Activated CD4-positive, alpha-beta T cell treated with anti-CD3 and anti-CD28 coated beads for 36 hours (primary cell): ENCODE measurements at regions of chr11 and their contacts with region 1.

Region 1: GRCh38 chr11:46560300-46560991 is 33.4 kb downstream of the AMBRA1 start:
- DNase-seq: peak; percentile 40
- ATAC-seq: peak; percentile 57
- H3K4me3 Mint-ChIP-seq: peak overlapping the region; percentile 65
- H3K27ac Mint-ChIP-seq: peak overlapping the region; percentile 90
- H3K4me1 Mint-ChIP-seq: peaks cover 64% of the 10 kb centered on the region
- H3K27me3 Mint-ChIP-seq: no peaks in the 10 kb centered on the region

Region 2: GRCh38 chr11:46380340-46381047 is 180.0 kb before region 1 on chr11:
- CTCF ChIA-PET with region 1: no interaction called
- POLR2A ChIA-PET with region 1: no interaction called
- intact Hi-C with region 1: no loop called
- DNase-seq: peak; percentile 90
- ATAC-seq: peak; percentile 65
- H3K4me3 Mint-ChIP-seq: peak overlapping the region; percentile 72
- H3K27ac Mint-ChIP-seq: peak overlapping the region; percentile 58
- H3K4me1 Mint-ChIP-seq: peaks cover 8% of the 10 kb centered on the region
- H3K27me3 Mint-ChIP-seq: peaks cover 8% of the 10 kb centered on the region

Region 3: DNA sequence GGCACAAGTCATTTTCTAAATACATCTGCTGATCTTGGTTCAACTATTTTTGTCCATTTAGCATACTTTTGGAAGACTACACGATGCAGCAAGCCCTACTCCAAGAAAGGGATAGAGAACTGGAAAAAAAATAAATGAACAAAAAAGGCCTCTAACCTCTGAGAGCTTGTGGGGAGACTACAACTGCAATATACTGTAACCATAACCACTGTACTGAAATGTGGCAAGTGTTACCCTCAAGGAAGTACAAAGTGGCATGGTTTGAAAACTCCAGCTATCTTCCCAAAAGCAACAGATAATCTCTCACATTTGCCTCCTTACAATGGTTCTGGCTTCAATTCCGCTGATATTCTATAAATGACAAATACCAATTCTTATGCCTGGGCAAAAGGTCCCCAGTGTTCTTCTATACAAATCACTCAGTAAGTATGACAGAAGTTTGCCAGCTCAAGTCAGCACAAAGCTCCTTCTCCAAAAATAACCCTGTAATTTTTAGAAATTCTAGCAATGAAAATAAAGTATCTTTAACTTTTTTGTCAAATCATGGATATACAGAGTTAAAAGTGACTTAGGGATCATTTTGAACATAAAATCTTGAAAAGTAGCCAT is 10.4 kb after region 1 on chr11:
- CTCF ChIA-PET with region 1: interaction called, 10 read pairs
- POLR2A ChIA-PET with region 1: no interaction called
- intact Hi-C with region 1: no loop called
- DNase-seq: no peak
- ATAC-seq: no peak
- H3K4me3 Mint-ChIP-seq: no peak overlapping the region
- H3K27ac Mint-ChIP-seq: no peak overlapping the region
- H3K4me1 Mint-ChIP-seq: peaks cover 25% of the 10 kb centered on the region
- H3K27me3 Mint-ChIP-seq: no peaks in the 10 kb centered on the region

Region 4: DNA sequence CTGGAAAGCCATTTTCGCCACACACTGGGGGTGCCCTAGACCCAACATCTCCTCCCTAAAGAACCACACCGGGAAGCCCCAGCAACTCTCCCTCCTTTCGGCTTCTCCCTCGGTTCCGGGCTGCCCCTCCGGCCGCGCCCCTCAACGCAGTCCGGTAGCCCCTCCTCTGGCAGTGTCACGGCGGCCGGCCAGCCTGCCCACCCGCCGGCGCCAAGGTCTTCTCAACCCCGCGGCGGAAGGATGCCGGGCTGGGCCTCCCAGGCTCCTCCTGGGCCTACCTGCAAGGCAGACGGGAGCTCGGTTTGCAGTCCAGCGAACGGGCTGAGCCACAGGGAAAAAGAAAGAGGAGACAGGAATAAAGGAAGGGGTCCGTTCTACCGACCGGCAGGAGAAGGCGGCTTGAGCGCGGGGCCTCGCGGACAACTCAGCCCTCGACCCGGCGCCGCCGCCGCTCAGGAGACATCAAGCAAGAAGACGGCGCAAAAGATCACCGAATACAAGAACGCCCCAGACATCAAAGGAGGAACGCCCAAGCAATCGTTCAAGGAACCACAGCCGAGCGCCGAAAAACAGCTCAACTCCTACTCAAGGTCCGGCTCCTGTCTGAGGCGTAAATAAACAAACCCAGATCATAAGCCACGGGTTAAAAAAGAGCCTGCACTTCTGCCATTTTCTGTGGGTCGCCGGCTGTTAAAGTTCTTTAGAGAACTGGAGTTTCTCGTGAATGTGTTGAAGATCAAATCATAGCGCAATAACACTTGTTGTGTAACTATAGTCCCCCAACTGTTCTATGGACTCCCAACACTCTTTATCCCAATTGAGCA is 33.3 kb after region 1 on chr11 and contains the start of gene AMBRA1:
- CTCF ChIA-PET with region 1: no interaction called
- POLR2A ChIA-PET with region 1: interaction called, 5 read pairs
- intact Hi-C with region 1: loop called (anchors 2 to 5 kb)
- DNase-seq: peak; percentile 91
- ATAC-seq: peak; percentile 87
- H3K4me3 Mint-ChIP-seq: peak within 1 kb of the TSS; percentile 93
- H3K27ac Mint-ChIP-seq: peak within 1 kb of the TSS; percentile 91
- H3K4me1 Mint-ChIP-seq: peaks cover 40% of the 10 kb centered on the region
- H3K27me3 Mint-ChIP-seq: no peaks in the 10 kb centered on the region
- total RNA-seq, gene AMBRA1: 24.8 to 26.4 TPM